Right lobe of liver (tissue), 6 donors: ENCODE measurements at regions of chr14 and their contacts with region 1.

Region 1: GRCh38 chr14:105709281-105710118 is 183.1 kb downstream of the TMEM121 start:
- DNase-seq: no peak
- ATAC-seq: peak; percentile 11 to 32 (median 18)
- H3K4me3 ChIP-seq: no peak overlapping the region
- H3K27ac ChIP-seq: no peak overlapping the region
- H3K4me1 ChIP-seq: no peaks in the 10 kb centered on the region
- H3K27me3 ChIP-seq: no peaks in the 10 kb centered on the region
- CTCF ChIP-seq: no peak
- POLR2A ChIP-seq: no peak

Region 2: GRCh38 chr14:105589161-105590062 is 120.1 kb before region 1 on chr14:
- intact Hi-C with region 1: loop called (anchors 5 to 10 kb)
- DNase-seq: peak in 2 of 3 donors; percentile 42 to 74
- ATAC-seq: peak; percentile 20 to 76 (median 40)
- H3K4me3 ChIP-seq: no peak overlapping the region
- H3K27ac ChIP-seq: no peak overlapping the region
- H3K4me1 ChIP-seq: no peaks in the 10 kb centered on the region
- H3K27me3 ChIP-seq: no peaks in the 10 kb centered on the region
- CTCF ChIP-seq: no peak
- POLR2A ChIP-seq: no peak

Region 3: GRCh38 chr14:106129274-106129673 is 419.8 kb after region 1 on chr14:
- intact Hi-C with region 1: no loop called
- DNase-seq: no peak
- ATAC-seq: no peak
- H3K4me3 ChIP-seq: no peak overlapping the region
- H3K27ac ChIP-seq: no peak overlapping the region
- H3K4me1 ChIP-seq: no peaks in the 10 kb centered on the region
- H3K27me3 ChIP-seq: no peaks in the 10 kb centered on the region
- CTCF ChIP-seq: no peak
- POLR2A ChIP-seq: no peak